ENCODE measurements at regions of chr16 and their contacts with region 1.

Region 1: GRCh38 chr16:27273670-27274423 is 5.3 kb upstream of the NSMCE1 start:
- DNase-seq: peak; percentile 44
- ATAC-seq: peak; percentile 82
- H3K4me3 Mint-ChIP-seq: peak overlapping the region; percentile 63
- H3K27ac Mint-ChIP-seq: peak overlapping the region; percentile 98
- H3K4me1 Mint-ChIP-seq: peaks cover 44% of the 10 kb centered on the region
- H3K27me3 Mint-ChIP-seq: no peaks in the 10 kb centered on the region

Region 2: GRCh38 chr16:27313422-27314160 is 39.7 kb after region 1 on chr16 and contains the start of gene IL4R:
- POLR2A ChIA-PET with region 1: interaction called, 19 read pairs
- DNase-seq: peak; percentile 84
- ATAC-seq: peak; percentile 30
- H3K4me3 Mint-ChIP-seq: peak within 1 kb of the TSS; percentile 93
- H3K27ac Mint-ChIP-seq: peak within 1 kb of the TSS; percentile 99
- H3K4me1 Mint-ChIP-seq: peaks cover 32% of the 10 kb centered on the region
- H3K27me3 Mint-ChIP-seq: peaks cover 5% of the 10 kb centered on the region
- total RNA-seq, gene IL4R: 215 TPM

Measured in activated naive CD8-positive, alpha-beta T cell treated with anti-CD3 and anti-CD28 coated beads, Interleukin-2, amount 10 ng/mL, durations not matched to agents 7 days and 5 days (primary cell).